BJ (cell line): ENCODE measurements at regions of chr6 and their contacts with region 1.

Region 1: DNA sequence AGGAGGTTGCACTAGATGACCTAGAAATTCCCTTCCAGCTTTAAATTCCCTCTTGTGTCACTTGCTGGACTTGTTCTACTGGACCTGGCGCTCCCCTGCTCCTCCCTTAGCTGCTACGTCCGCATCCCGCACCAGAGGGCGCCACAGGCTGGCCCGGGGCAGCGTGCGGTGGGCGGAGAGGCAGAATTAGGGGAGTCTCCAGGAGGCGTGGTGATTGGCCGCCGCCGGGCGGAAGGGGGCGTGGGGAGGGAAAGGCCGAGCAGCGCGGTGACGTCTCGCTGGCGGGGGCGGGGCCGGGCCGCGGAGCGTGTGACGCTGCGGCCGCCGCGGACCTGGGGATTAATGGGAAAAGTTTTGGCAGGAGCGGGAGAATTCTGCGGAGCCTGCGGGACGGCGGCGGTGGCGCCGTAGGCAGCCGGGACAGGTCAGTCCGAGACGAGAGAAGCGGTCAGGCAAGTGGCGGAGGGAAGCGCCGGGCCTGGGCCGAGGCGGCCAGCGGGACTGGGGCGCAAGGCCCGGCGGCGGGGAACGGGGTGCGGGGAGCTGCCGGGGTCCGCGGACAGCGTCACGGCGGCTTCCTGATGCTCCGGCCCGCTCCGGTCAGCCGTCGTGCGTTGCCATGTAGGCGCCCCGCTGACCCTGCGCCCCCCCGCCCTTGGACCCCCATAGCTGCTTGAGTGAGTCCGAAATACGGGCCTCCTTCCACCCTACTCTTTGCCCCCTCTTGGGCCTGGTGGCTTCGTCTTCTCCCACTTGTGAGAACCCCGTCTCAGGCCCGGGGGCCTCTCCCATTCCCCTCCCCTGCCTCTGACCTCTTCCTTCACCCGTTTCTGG is at the start of gene PPARD:
- DNase-seq: peak; percentile 69
- H3K4me3 ChIP-seq: peak within 1 kb of the TSS; percentile 86
- H3K27me3 ChIP-seq: no peaks in the 10 kb centered on the region
- CTCF ChIP-seq: peak; percentile 97
- polyA plus RNA-seq, gene PPARD: 22.8 and 40.9 TPM in 2 replicates

Region 2: GRCh38 chr6:35327349-35328027 is 15.0 kb before region 1 on chr6:
- CTCF ChIA-PET with region 1: interaction called, 14 read pairs
- POLR2A ChIA-PET with region 1: no interaction called
- DNase-seq: no peak
- H3K4me3 ChIP-seq: no peak overlapping the region
- H3K27me3 ChIP-seq: peaks cover 3% of the 10 kb centered on the region; the same call in 1 of the 2 replicates
- CTCF ChIP-seq: peak; percentile 85

Region 3: DNA sequence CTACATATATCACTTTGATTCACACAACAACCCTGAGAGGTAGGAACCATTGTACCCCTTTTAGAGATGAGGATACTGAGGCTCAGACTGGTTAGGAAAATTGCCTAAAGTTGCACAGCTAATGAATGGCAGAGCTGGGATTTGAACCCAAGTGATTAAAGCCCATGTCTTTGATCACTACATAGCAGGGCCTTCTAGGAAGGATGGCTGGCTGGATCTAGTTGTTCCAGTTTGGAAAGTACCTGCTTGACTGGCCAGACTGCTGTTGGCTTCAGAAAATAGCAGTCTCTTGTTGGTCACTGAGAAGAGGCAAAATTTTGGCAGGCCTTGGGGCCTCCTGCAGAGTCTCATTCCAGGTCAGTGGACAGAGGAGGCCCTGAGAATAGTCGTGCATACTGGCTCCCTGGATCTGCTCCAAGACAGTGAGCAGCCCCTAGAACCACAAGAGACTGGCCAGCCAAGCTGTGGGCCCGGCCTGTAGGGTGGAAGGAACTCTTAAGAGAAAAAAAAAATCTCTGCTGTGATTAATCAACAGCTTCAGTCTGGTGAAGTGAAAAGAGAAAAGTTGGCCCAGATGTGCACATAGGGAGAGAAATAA is 17.4 kb after region 1 on chr6:
- CTCF ChIA-PET with region 1: interaction called, 15 read pairs
- POLR2A ChIA-PET with region 1: interaction called, 3 read pairs
- DNase-seq: no peak
- H3K4me3 ChIP-seq: no peak overlapping the region
- H3K27me3 ChIP-seq: no peaks in the 10 kb centered on the region
- CTCF ChIP-seq: no peak

Region 4: GRCh38 chr6:35415065-35415991 is 72.9 kb after region 1 on chr6:
- CTCF ChIA-PET with region 1: interaction called, 31 read pairs
- POLR2A ChIA-PET with region 1: interaction called, 3 read pairs
- DNase-seq: no peak
- H3K4me3 ChIP-seq: no peak overlapping the region
- H3K27me3 ChIP-seq: no peaks in the 10 kb centered on the region
- CTCF ChIP-seq: peak; percentile 66

Region 5: DNA sequence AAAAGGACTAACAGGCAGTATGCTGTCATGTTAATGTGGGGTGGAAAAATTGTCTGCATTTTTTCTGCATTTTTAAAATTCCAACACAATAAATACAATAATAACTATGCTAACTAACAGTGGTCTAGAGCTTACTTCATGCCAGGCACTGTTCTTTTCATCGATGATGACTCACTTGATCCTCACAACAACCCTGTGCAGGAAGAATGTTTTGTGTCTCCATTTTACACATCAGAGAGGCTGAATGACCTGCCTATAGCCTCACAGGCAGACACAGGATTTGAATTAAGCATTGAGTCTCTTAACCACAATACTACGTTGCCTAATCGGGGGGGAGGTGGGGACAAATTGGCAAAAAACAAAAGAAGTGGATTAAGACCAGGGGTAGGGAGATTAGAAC is 82.8 kb after region 1 on chr6:
- CTCF ChIA-PET with region 1: interaction called, 31 read pairs
- POLR2A ChIA-PET with region 1: no interaction called
- DNase-seq: peak; percentile 85
- H3K4me3 ChIP-seq: no peak overlapping the region
- H3K27me3 ChIP-seq: no peaks in the 10 kb centered on the region
- CTCF ChIP-seq: no peak

Region 6: DNA sequence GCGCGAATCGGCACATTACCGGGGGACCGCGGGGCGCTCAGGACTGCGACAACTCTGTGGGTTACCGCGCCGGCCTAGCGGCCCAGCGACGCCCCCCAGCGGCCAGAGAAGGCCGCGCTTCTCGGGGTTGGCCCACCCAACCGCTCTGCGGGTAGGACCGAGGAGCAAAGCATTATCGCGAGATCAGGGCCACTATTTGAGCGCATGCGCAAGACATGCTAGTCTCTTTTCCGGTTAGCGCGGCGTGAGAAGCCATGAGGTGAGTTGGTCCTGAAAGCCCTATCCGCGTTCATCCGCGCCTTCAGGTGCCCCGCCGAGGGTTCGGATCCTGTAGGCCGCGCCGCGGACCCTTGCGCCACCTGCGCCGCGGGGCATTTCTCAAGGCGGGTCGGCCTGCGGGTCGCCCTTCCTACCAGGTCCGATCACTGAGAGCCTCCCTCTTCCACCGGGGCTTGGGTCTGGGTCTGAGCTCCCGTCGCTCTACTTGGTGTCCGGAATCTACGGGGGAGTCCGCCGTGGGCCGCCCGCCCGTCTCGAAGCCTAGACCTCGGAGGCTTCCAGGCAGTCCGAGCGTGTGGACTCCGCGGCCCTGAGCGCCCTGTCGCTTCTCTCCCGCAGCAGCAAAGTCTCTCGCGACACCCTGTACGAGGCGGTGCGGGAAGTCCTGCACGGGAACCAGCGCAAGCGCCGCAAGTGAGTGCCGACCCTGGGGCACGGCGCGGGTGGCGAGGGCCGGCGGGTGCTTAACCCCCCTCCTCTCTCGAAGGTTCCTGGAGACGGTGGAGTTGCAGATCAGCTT is 125.9 kb after region 1 on chr6 and contains the start of gene RPL10A:
- CTCF ChIA-PET with region 1: interaction called, 16 read pairs
- POLR2A ChIA-PET with region 1: interaction called, 3 read pairs
- DNase-seq: peak; percentile 79
- H3K4me3 ChIP-seq: peak within 1 kb of the TSS; percentile 80
- H3K27me3 ChIP-seq: no peaks in the 10 kb centered on the region
- CTCF ChIP-seq: peak; percentile 100
- polyA plus RNA-seq, gene RPL10A: 2,524 and 2,691 TPM in 2 replicates

Region 7: DNA sequence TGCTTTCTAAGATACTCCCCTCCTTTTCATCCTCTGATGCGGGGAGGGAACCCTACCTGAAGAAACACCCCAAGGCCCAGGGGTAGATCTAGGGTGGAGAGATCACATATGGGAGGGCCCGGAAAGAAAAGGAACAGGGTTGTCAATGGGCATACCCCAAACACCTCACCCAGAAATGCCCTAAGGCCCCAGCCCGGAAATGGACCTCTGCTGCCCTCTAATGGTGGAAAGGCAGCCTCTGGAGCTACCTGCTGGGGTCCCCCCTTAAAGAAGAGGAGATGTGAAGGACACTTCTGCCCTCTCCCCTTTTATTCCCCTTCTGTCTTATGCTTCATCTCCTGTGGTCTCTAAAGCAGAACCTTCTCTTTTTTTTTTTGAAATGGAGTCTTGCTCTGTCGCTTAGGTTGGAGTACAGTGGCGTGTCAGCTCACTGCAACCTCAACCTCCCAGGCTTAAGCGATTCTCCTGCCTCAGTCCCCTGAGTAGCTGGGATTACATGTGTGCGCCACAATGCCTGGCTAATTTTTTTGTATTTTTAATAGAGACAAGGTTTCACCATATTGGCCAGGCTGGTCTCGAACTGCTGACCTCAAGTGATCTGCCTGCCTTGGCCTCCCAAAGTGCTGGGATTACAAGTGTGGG is 393.9 kb after region 1 on chr6:
- CTCF ChIA-PET with region 1: no interaction called
- POLR2A ChIA-PET with region 1: no interaction called
- DNase-seq: no peak
- H3K4me3 ChIP-seq: no peak overlapping the region
- H3K27me3 ChIP-seq: no peaks in the 10 kb centered on the region
- CTCF ChIP-seq: peak; percentile 94